Activated CD4-positive, alpha-beta T cell treated with anti-CD3 and anti-CD28 coated beads, Interleukin-2, amount 10 ng/mL, durations not matched to agents 24 days and 14 days (primary cell): ENCODE measurements at regions of chr17 and their contacts with region 1.

Region 1: GRCh38 chr17:48625495-48626244 is 488 bp downstream of the HOXB9 start:
- DNase-seq: peak; percentile 81
- H3K4me3 Mint-ChIP-seq: peak overlapping the region; percentile 85
- H3K27ac Mint-ChIP-seq: peak overlapping the region; percentile 64
- H3K4me1 Mint-ChIP-seq: peaks cover 10% of the 10 kb centered on the region
- H3K27me3 Mint-ChIP-seq: peaks cover 82% of the 10 kb centered on the region

Region 2: DNA sequence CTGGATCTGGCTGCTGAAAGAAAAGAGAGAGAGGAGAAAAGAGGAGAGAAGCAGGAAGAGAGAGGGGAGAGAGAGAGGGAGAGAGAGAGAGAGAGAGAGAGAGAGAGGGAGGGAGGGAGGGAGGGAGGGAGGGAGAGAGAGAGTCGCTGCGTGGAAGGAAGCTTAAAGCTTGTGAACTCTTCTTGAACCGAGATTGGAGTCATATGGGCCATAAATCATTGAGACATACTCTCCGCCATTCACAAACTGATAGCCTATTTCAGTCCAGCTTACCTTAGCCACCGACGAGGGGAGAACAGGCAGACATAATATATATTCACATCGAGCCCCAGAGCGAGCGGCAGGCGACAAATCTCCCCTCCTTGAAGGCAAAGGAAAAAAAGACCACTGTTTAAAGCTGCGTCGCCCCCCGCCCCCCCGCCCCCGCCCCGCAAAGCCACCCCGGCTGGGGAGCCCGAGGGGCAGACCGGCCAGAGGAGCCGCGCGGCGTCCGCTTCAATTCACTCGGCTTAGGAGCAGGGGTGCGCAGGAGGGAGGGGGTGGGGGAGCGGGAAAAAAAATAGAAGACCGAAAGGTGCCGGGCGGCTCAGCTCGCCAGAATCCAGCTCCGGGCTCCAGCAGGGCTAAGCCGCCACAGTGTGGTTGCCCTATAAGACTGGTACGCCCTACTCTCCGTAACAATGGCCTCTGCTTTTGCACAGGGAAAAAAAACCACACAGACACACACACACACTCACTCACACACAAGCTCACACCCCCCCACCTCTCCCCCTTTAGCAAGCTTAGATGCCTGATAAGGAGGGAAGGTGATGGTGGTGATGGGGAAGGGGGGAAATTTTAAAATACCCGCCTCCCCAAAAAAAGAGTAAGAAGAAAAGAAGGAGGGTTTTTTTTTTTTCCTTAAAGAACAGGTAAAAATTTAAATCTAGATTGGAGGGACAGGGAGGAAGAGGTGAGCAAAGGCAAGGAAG is 70.1 kb before region 1 on chr17:
- intact Hi-C with region 1: no loop called
- DNase-seq: peak; percentile 61
- H3K4me3 Mint-ChIP-seq: peak overlapping the region; percentile 79
- H3K27ac Mint-ChIP-seq: peak overlapping the region; percentile 75
- H3K4me1 Mint-ChIP-seq: peaks cover 8% of the 10 kb centered on the region
- H3K27me3 Mint-ChIP-seq: peaks cover 36% of the 10 kb centered on the region

Region 3: GRCh38 chr17:48636177-48637018 is 10.7 kb after region 1 on chr17:
- intact Hi-C with region 1: loop called (anchors 1 kb)
- DNase-seq: peak; percentile 91
- H3K4me3 Mint-ChIP-seq: no peak overlapping the region
- H3K27ac Mint-ChIP-seq: no peak overlapping the region
- H3K4me1 Mint-ChIP-seq: peaks cover 8% of the 10 kb centered on the region
- H3K27me3 Mint-ChIP-seq: peaks cover 92% of the 10 kb centered on the region